Activated CD4-positive, alpha-beta memory T cell treated with anti-CD3 and anti-CD28 coated beads for 36 hours (primary cell): ENCODE measurements at regions of chr12 and their contacts with region 1.

Region 1: DNA sequence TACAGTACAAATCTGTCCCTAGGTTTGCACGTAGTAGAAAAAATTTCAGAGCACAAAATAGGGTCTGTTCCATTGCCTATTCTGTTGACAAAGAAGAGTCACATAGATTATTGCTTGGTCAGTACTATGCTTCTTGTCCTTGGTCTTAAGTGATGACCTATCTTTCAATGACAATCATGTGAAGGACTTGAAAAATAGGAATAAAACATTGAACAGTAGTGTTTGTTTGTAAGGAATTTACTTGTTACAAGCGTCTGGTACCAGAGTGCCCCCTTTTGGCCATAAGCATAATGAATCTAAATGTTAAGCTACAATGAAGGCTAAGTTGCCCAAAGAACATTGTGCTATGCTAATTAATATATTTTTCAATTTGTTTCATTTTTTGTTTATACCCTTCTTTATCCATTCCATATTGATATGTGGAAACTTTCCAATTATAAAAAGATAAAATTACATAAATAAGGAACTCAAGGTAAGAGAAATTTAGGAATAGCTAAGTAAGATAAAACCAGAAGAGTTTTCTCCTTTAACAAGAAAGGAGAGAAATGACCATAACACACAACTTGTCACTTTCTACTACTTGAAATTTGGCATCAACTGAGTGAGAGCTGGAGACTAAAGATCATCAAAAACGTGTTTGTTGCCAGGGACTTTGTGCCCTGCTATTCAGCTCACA is 204.7 kb downstream of the EPS8 start:
- DNase-seq: peak; percentile 18
- H3K4me3 Mint-ChIP-seq: no peak overlapping the region
- H3K27ac Mint-ChIP-seq: no peak overlapping the region
- H3K4me1 Mint-ChIP-seq: peaks cover 6% of the 10 kb centered on the region
- H3K27me3 Mint-ChIP-seq: no peaks in the 10 kb centered on the region

Region 2: DNA sequence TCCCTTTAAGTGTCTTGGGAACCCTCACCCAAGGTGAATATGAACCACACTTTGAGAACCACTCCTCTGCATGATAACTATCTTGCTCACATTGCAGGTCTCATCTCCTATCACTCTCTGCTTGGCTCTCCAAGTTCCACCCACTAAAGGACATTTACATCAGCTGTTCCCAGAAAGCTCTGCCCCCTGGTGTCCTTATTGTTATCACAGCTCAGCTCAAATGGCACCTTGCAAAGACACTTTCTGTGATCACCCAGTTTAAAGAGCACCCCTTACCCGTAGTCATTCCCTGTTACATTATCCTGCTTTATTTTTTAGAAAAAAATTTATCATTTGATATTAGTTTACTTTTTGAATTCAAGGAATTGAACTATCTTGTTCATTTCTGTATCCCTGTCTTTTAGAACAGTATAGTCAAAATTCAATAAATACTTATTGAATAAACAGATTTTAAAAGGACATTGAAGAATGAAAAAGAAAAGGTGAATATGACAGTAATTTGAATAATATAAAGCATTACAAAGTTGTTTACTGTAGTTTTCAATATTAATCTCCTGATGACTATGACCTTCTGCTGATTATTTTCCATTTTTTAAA is 867.6 kb before region 1 on chr12:
- CTCF ChIA-PET with region 1: no interaction called
- POLR2A ChIA-PET with region 1: no interaction called
- intact Hi-C with region 1: no loop called
- DNase-seq: peak; percentile 58
- H3K4me3 Mint-ChIP-seq: no peak overlapping the region
- H3K27ac Mint-ChIP-seq: no peak overlapping the region
- H3K4me1 Mint-ChIP-seq: peaks cover 2% of the 10 kb centered on the region
- H3K27me3 Mint-ChIP-seq: peaks cover 3% of the 10 kb centered on the region

Region 3: GRCh38 chr12:15227004-15227679 is 357.4 kb before region 1 on chr12:
- CTCF ChIA-PET with region 1: interaction called, 9 read pairs
- POLR2A ChIA-PET with region 1: no interaction called
- intact Hi-C with region 1: loop called (anchors 5 kb)
- DNase-seq: peak; percentile 43
- H3K4me3 Mint-ChIP-seq: no peak overlapping the region
- H3K27ac Mint-ChIP-seq: no peak overlapping the region
- H3K4me1 Mint-ChIP-seq: no peaks in the 10 kb centered on the region
- H3K27me3 Mint-ChIP-seq: peaks cover 27% of the 10 kb centered on the region

Region 4: GRCh38 chr12:15276088-15276698 is 308.3 kb before region 1 on chr12:
- CTCF ChIA-PET with region 1: interaction called, 65 read pairs
- POLR2A ChIA-PET with region 1: no interaction called
- intact Hi-C with region 1: loop called (anchors 1 kb)
- DNase-seq: no peak
- H3K4me3 Mint-ChIP-seq: no peak overlapping the region
- H3K27ac Mint-ChIP-seq: no peak overlapping the region
- H3K4me1 Mint-ChIP-seq: peaks cover 10% of the 10 kb centered on the region
- H3K27me3 Mint-ChIP-seq: peaks cover 2% of the 10 kb centered on the region

Region 5: GRCh38 chr12:15546102-15546701 is 38.3 kb before region 1 on chr12:
- CTCF ChIA-PET with region 1: interaction called, 48 read pairs
- POLR2A ChIA-PET with region 1: no interaction called
- intact Hi-C with region 1: no loop called
- DNase-seq: peak; percentile 31
- H3K4me3 Mint-ChIP-seq: no peak overlapping the region
- H3K27ac Mint-ChIP-seq: peak overlapping the region; percentile 78
- H3K4me1 Mint-ChIP-seq: peaks cover 53% of the 10 kb centered on the region
- H3K27me3 Mint-ChIP-seq: no peaks in the 10 kb centered on the region

Region 6: DNA sequence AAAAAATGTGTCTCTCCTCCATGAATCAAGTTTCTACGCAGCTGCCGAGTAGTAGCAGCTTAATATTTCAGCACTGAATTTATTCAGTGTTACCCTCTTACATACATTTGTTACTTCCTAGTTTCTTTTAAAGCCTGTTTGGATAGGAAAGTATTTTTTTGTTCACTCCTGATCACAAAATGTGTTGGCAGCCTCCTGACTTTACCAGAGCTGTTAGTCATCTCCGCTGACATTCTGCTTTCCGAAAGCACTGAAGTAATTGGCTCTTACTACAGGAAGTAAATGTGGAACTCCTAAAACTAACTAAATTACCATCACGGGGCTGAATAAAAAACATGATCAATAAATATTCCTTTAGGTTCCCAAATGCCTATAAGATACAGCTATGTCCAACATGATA is 20.8 kb before region 1 on chr12:
- CTCF ChIA-PET with region 1: interaction called, 18 read pairs
- POLR2A ChIA-PET with region 1: no interaction called
- intact Hi-C with region 1: no loop called
- DNase-seq: peak; percentile 40
- H3K4me3 Mint-ChIP-seq: peak overlapping the region; percentile 69
- H3K27ac Mint-ChIP-seq: peak overlapping the region; percentile 90
- H3K4me1 Mint-ChIP-seq: peaks cover 58% of the 10 kb centered on the region
- H3K27me3 Mint-ChIP-seq: no peaks in the 10 kb centered on the region

Region 7: GRCh38 chr12:15856097-15856982 is 271.8 kb after region 1 on chr12:
- CTCF ChIA-PET with region 1: interaction called, 85 read pairs
- POLR2A ChIA-PET with region 1: no interaction called
- intact Hi-C with region 1: no loop called
- DNase-seq: peak; percentile 22
- H3K4me3 Mint-ChIP-seq: no peak overlapping the region
- H3K27ac Mint-ChIP-seq: no peak overlapping the region
- H3K4me1 Mint-ChIP-seq: no peaks in the 10 kb centered on the region
- H3K27me3 Mint-ChIP-seq: peaks cover 5% of the 10 kb centered on the region